Right cardiac atrium (tissue), 5 donors: ENCODE measurements at regions of chr15 and their contacts with region 1.

Region 1: DNA sequence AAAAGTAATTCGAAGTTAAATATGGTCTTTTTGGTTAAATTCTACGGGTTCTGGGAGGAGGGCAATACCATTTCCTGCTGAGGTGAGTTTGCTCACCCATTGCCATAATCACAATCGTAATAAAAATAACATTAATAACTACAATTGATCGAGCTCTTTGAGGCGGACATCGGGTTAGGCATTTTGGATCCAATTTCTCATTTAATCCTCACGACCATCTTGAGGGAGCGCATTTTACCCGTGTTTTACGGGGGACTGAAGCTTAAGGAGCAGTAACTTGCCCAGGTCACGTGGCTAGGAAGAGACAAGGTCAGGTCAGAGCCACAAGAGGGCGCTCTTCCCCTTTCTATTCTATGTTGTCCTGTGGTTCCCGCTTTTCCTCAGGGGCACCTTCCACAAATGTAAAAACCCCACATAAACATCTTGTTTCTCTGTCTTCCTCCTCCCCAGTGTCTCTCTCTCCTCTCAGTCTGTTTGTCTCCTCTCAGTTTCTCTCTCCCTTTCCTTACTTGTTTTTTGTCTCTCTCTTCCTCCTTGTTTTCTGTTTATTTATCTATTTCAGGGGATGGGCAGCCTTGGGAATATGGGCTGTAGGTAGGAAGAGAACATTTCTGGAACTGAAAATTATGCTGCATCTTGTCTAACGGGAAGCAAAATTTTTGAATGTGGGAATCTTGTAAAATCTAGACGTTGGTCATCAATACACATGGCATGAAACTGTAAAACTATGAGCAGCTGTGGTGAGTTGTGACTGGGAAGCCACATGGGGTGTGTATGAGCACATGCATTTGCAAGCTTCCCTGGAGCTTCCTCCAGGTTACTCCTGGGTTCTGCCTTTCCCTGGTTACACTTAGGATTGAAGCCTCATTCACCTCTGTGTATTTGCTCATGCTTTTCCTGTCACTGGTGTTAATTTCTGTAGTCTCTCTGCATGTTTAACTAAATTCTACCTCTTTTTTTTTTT is 71.0 kb downstream of the SQOR start:
- DNase-seq: peak; percentile 62 to 86 (median 74)
- ATAC-seq: peak; percentile 91 to 93
- H3K4me3 ChIP-seq: peak overlapping the region; percentile 66
- H3K27ac ChIP-seq: no peak overlapping the region
- H3K4me1 ChIP-seq: no peaks in the 10 kb centered on the region
- H3K27me3 ChIP-seq: no peaks in the 10 kb centered on the region

Region 2: DNA sequence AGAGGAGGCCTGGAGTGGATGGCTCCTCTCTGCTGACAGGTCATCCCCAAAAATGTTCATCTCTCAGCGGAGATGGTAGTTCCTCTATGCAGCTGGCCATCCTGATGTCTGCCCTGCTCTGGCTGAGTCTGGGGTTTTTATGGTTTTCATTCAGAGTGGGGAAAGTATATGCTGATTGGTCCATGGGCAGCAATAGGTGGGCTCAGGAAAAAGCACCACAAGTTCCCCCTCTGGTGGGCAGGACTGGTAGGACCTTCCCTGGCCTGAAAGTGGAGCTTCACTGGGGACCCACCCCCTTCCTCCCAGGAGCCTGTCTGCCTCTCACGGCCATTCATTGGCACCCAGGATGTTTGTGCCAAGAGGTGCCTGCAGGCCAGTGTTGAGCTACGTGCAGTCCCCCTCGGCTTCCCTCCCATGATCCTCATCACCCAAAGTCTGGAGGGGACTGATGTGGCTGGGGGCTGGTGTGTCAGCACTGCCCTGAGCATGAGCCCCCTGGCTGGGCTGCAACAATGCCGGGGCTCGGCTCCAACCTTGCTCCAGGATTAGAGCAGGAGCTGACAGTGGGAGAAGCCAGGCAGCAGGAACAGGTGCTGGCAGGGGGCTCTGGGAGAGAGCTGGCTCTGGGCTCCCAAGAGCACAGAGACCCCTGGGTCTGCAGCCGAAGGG is 131.7 kb before region 1 on chr15:
- intact Hi-C with region 1: no loop called
- DNase-seq: no peak
- ATAC-seq: no peak
- H3K4me3 ChIP-seq: no peak overlapping the region
- H3K27ac ChIP-seq: no peak overlapping the region
- H3K4me1 ChIP-seq: no peaks in the 10 kb centered on the region
- H3K27me3 ChIP-seq: no peaks in the 10 kb centered on the region

Region 3: DNA sequence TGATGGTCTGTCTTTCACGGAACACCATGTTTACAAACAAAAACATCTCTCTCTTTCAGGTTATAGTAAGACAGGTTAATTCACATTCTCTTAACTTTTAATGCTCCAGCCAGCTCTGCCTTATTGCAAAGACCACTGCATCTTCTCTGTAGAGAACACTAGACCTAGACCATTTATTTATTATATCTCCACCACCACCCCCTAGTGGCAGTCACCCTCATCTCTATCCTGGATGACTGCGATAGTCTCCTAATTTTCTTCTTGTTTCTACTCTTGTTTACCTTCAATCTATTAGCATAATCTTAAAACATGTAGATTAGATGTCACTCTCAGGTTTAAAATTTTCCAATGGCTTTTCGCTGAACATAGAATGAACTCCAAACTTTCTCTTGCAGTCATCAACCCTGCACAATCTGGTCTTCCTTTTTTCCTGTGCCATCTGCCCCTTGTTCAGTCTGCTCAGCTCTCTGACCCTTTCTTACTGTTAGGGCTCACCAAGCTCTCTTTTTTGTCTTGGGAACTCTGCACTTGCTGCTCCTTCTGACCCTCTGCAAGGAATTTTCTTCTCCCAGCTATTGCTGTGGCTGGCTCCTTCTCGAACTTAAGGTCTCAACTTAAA is 84.6 kb after region 1 on chr15:
- intact Hi-C with region 1: loop called in 3 of 4 experiments (anchors 2 to 5 kb)
- DNase-seq: peak in 1 of 3 donors; percentile 15
- ATAC-seq: peak; percentile 43 to 56
- H3K4me3 ChIP-seq: no peak overlapping the region
- H3K27ac ChIP-seq: no peak overlapping the region
- H3K4me1 ChIP-seq: no peaks in the 10 kb centered on the region
- H3K27me3 ChIP-seq: peaks cover 3% of the 10 kb centered on the region